GM18951 (cell line): ENCODE measurements at regions of chr12 and their contacts with region 1.

Region 1: GRCh38 chr12:18861287-18861858 is 123.5 kb downstream of the CAPZA3 start:
- POLR2A ChIP-seq: no peak

Region 2: DNA sequence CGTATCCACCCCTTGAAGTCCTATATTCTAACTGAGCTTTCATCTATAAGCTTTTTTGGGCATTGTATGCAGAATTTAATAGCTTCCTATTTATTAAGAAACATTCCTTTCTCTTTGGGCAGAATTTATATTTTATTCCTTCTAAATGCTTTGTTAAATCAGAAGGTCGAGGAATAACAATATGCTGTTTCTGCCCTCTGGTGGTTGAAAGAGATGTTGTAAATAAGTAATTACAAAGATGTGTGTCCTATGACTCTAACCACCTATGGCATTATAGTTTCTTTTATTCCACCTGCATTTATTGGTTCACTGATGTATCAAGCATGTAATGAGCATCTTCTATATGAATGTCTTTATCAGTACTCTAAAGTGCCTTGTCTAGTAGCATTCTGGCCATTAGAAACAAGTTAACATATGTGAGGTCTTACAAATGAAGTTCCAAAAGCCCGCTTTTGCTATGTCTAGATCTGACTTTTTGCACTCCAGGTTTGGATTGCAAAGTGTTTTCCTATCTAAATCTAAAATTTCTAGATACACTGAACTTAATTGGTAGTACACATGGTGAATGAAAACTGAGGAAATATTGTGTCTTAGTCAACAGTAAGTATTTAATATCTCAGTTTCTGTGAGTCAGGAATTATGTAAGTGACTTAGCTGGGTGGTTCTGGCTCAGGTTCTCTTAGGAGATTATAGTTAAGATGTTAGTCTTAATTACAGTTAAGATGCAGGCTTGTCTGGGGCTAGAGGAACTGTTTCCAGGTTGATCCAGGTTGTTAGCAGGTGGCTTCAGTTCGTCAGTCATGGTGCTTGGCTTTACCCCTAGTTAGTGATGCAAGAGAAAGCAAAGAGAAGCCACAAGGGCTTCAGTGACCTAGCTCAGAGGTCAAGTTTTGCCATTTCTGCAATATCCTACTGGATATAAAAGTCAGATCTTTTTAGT is 325.6 kb after region 1 on chr12:
- in situ Hi-C with region 1: loop called (anchors 25 kb)
- POLR2A ChIP-seq: no peak